ENCODE measurements at regions of chr5 and their contacts with region 1.

Region 1: DNA sequence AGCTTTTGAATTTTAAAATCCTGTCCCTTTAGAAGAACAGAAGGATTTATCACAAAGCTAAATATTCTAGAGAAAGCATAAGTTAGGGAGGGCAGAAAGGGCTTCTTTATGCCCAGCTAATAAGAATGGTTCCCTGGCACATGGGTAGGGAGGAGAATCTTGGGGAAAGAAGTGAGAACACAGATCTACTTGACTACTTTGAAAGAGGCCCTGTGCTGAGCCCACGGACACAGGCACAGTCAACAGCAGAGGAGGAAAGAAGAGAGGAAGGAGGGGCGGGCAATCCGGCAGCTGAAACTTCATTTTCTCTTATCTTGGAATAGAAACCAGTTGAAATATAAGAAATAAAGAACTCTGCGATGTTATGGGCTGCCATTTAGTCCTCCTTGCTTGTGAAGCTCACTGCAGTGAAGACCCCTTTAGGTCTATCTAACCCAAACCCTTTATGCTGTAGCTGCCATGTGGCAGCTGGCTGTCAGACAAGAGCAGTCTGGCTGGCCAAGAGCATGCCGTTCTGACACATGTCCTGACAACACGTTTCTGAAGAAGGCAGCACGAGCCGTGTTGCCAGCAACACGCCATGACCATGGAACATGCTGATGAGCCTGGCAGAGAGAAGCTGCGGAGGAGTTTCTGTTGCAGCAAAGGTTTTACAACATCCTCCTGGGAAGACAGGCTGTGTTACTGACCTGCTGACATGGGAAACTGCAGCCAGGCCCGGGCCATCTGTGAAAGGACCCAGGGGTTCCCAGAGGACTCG is 34.2 kb downstream of the ABLIM3 start:
- DNase-seq: peak; percentile 81

Region 2: GRCh38 chr5:148606296-148606695 is 569.2 kb before region 1 on chr5:
- intact Hi-C with region 1: loop called in 1 of 2 experiments (anchors 5 kb)
- DNase-seq: no peak

Measured in posterior vena cava (tissue), 2 donors.